Activated B cell treated with CpG ODN at 0.5 μM for 24 hours (primary cell): ENCODE measurements at regions of chr1 and their contacts with region 1.

Region 1: GRCh38 chr1:235275223-235275622 is 52.8 kb downstream of the ARID4B start:
- DNase-seq: no peak
- ATAC-seq: peak; percentile 86
- H3K4me3 Mint-ChIP-seq: peak overlapping the region; percentile 21
- H3K27ac Mint-ChIP-seq: peak overlapping the region; percentile 76
- H3K4me1 Mint-ChIP-seq: peaks cover 75% of the 10 kb centered on the region
- H3K27me3 Mint-ChIP-seq: no peaks in the 10 kb centered on the region
- CTCF ChIP-seq: no peak

Region 2: GRCh38 chr1:235259133-235259778 is 16.0 kb before region 1 on chr1:
- CTCF ChIA-PET with region 1: interaction called, 6 read pairs
- POLR2A ChIA-PET with region 1: interaction called, 7 read pairs
- intact Hi-C with region 1: loop called (anchors 2 kb)
- DNase-seq: no peak
- ATAC-seq: peak; percentile 34
- H3K4me3 Mint-ChIP-seq: peak overlapping the region; percentile 9
- H3K27ac Mint-ChIP-seq: peak overlapping the region; percentile 68
- H3K4me1 Mint-ChIP-seq: peaks cover 67% of the 10 kb centered on the region
- H3K27me3 Mint-ChIP-seq: no peaks in the 10 kb centered on the region
- CTCF ChIP-seq: no peak